Dorsolateral prefrontal cortex (tissue), 120 donors: ENCODE measurements at regions of chrX and their contacts with region 1.

Region 1: GRCh38 chrX:109886122-109886761 is 116.7 kb upstream of the TMEM164 start:
- DNase-seq: peak in 2 of 10 donors; percentile 6 to 18
- H3K4me3 ChIP-seq: no peak overlapping the region
- H3K27ac ChIP-seq: no peak overlapping the region
- H3K27me3 ChIP-seq: peaks cover 0 to 81% (median 21%) of the 10 kb centered on the region in 45 donors
- CTCF ChIP-seq: peak; percentile 36 to 76 (median 64)

Region 2: DNA sequence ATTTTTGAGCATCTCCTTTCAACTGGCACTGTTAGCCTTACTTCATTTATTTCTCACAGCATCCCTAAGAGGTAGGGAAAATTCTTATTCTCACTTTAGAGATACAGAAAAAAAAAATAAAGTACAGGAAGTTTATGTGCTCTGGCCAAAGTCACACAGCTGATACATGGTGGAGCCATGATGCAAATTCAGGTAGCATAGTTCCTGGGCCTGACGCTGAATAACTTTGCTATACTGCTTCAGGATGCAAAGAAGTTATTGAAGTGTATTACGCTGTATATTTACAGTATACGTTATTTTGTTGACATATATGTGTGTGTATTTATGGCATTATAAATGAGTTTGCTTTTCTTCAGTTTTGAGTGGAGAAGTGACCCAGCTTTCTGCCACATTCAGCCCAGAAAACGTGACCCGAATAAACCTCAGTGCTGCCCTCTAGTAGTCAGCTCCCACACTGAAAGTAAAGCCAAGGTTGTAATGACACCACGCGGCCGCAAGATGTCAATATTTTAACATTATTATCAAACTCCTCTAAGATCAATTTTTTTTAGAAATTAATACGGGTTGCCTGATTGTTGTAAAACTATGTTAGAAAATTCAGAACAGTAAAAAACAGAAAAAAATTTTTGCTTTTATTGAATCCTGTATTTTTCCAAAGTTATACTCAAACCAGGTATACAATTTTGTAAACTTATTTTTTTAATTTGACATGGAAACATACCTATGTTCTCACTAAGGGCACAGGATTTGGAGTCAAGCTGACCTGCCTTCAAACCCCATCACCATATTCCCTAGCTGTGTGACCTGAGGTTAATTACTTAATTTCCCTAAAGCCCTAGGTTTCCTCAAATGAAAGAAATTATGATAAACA is 400.5 kb before region 1 on chrX:
- intact Hi-C with region 1: loop called in 1 of 2 experiments (anchors 10 kb)
- DNase-seq: peak in 9 of 10 donors; percentile 30 to 86 (median 58)
- H3K4me3 ChIP-seq: no peak overlapping the region
- H3K27ac ChIP-seq: no peak overlapping the region
- H3K27me3 ChIP-seq: peaks cover 0 to 63% (median 15%) of the 10 kb centered on the region in 45 donors
- CTCF ChIP-seq: peak; percentile 38 to 100 (median 98)

Region 3: GRCh38 chrX:109709129-109709631 is 177.1 kb before region 1 on chrX:
- intact Hi-C with region 1: loop called in 1 of 2 experiments (anchors 2 kb)
- DNase-seq: no peak
- H3K4me3 ChIP-seq: no peak overlapping the region
- H3K27ac ChIP-seq: no peak overlapping the region
- H3K27me3 ChIP-seq: peaks cover 0 to 70% (median 10%) of the 10 kb centered on the region in 45 donors
- CTCF ChIP-seq: no peak

Region 4: DNA sequence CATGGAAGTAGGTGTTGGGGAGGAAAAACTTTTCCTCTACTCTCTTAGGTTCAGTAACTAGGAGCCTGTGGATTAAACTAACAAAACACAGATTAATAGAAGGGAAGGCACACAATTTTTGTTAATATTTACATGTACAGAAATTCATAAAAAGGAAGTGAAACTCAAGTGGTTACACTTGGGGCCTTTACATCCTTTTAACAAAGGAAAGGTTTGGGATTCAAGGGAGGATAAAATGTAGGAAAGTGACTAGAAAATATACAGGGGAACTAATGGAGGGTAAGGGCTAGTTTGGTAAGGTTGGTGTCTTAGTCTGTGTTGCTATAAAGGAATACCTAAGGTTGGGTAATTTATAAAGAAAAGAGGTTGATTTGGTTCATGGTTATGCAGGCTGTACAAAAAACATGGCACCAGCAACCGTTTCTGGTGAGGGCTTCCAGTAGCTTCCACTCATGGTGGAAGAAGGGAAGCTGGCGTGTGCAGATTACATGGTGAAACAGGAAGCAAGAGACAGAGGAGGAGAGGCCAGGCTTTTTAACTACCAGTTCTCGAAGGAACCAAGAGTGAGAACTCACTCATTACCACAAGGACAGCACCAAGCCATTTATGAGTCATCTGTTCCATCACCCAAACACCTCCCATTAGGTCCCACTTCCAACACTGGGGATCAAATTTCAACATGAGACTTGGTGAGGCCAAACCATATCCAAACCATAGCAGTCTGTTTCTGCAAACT is 785.0 kb after region 1 on chrX:
- intact Hi-C with region 1: no loop called
- DNase-seq: no peak
- H3K4me3 ChIP-seq: no peak overlapping the region
- H3K27ac ChIP-seq: no peak overlapping the region
- H3K27me3 ChIP-seq: peaks cover 0 to 75% (median 13%) of the 10 kb centered on the region in 45 donors
- CTCF ChIP-seq: no peak